Colonic mucosa (tissue), 4 donors: ENCODE measurements at regions of chr17 and their contacts with region 1.

Region 1: DNA sequence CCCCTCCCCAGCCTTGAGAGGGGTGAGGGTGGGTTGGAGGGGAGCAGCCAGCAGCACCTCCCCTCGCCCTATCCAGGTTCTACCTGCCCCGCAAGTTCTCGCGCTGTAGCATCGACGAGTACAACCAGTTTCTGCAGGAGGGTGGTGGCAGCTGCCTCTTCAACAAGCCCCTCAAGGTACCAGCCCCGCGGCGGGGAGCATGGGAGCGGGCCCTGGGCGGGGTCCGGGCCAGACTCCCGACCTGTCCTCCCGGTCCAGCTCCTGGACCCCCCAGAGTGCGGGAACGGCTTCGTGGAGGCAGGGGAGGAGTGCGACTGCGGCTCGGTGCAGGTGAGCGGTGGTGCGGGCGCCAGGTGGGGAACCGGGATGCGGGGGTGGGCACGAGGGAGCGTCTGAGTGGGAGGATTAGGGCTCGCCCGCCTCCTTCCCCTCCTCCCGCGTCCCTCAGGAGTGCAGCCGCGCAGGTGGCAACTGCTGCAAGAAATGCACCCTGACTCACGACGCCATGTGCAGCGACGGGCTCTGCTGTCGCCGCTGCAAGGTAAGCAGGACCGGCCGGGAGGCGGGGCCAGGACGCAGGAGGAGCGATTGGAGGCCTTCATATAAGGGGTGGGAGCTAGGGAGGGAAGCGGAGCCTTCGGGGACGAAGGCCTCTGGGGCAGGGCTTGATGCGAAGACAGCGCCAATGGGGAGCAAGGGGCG is 16.5 kb downstream of the ADAM11 start:
- DNase-seq: peak; percentile 99
- H3K4me3 ChIP-seq: peak overlapping the region; percentile 49
- H3K27ac ChIP-seq: no peak overlapping the region
- H3K4me1 ChIP-seq: no peaks in the 10 kb centered on the region
- H3K27me3 ChIP-seq: no peaks in the 10 kb centered on the region
- CTCF ChIP-seq: no peak

Region 2: GRCh38 chr17:44864866-44865660 is 89.8 kb after region 1 on chr17:
- intact Hi-C with region 1: loop called (anchors 2 kb)
- DNase-seq: peak; percentile 69
- H3K4me3 ChIP-seq: no peak overlapping the region
- H3K27ac ChIP-seq: no peak overlapping the region
- H3K4me1 ChIP-seq: no peaks in the 10 kb centered on the region
- H3K27me3 ChIP-seq: no peaks in the 10 kb centered on the region
- CTCF ChIP-seq: peak; percentile 86

Region 3: GRCh38 chr17:44884941-44885340 is 109.7 kb after region 1 on chr17:
- intact Hi-C with region 1: loop called (anchors 5 kb)
- DNase-seq: no peak
- H3K4me3 ChIP-seq: no peak overlapping the region
- H3K27ac ChIP-seq: no peak overlapping the region
- H3K4me1 ChIP-seq: no peaks in the 10 kb centered on the region
- H3K27me3 ChIP-seq: no peaks in the 10 kb centered on the region
- CTCF ChIP-seq: no peak

Region 4: DNA sequence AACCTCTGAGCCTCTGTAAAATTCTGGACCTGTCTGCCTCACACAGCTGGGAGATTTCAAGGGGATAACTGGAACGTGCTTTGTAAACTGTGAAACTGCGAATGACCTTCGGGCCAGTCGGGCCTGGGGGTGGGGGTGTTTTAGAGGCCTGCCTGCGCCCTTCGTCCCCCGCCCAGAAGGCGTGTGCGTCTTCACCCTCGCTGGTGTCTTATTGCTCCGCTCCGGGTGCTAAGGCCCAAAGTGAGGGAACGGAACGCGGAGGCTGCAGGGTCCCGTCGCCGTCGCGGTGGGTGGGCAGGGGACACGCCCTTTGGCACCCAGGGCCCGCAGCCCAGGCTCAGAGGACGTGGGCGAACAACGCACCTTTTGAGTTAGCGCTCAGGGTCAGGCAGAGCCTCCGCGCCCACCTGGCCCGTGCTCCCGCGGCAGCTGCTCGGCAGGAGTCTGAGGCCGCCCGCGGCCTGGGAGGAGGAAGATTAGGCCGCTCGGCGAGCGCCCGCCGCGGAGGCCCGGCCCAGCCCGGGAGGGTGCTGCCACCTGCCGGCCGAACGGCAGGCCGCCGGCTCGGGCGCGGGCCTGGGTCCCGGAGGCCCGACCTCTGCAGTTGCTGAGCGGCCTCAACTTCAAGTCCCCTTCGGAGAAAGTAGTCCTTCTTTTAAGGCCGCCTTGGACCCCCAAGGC is 246.5 kb after region 1 on chr17:
- intact Hi-C with region 1: loop called (anchors 10 kb)
- DNase-seq: peak; percentile 54
- H3K4me3 ChIP-seq: peak overlapping the region; percentile 38
- H3K27ac ChIP-seq: peak overlapping the region; percentile 35
- H3K4me1 ChIP-seq: peaks cover 3% of the 10 kb centered on the region
- H3K27me3 ChIP-seq: no peaks in the 10 kb centered on the region
- CTCF ChIP-seq: peak; percentile 92